ENCODE measurements at regions of chr3 and their contacts with region 1.

Region 1: DNA sequence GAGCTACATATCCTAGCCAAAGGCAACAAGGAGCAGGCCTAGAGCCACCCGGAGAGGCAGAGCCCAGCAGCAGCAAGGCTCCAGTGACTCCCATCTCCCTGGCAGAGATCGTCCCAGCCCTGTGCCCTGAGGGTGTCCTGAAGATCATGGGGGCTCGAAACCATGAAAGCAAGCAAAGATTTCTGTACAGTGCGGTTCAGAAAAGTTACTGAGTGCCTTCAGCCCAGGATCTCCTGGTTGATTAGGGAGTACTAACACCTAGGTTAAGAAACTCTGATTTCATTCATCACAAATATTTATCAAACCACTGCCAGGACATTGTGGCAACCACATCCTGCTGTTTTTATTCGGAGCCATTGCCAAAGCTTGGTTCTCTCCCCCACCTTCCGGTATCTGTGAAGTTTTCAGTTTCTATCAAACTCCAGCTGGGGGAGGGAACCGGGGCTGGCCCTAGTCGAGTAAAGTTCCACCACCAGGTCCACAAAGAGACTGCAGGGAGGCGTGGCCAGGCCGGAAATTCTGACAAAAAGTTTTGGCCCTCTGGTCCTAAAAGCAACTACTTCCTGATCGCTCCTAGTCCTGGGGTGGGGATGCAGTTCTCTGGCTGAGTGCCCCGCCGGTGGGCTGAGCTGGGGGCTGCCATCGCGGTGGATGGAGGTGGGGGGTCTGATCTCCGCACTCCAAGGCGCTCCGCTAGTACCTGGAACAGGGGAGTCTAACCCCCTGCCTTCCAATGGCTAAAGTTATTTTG is 1.2 kb downstream of the RAB43 start:
- DNase-seq: peak; percentile 98
- ATAC-seq: peak; percentile 69
- H3K4me3 Mint-ChIP-seq: peak overlapping the region; percentile 84
- H3K27ac Mint-ChIP-seq: peak overlapping the region; percentile 91
- H3K4me1 Mint-ChIP-seq: peaks cover 56% of the 10 kb centered on the region
- H3K27me3 Mint-ChIP-seq: no peaks in the 10 kb centered on the region

Region 2: GRCh38 chr3:128763967-128764366 is 356.5 kb before region 1 on chr3:
- CTCF ChIA-PET with region 1: no interaction called
- POLR2A ChIA-PET with region 1: no interaction called
- DNase-seq: peak; percentile 49
- ATAC-seq: peak; percentile 80
- H3K4me3 Mint-ChIP-seq: no peak overlapping the region
- H3K27ac Mint-ChIP-seq: peak overlapping the region; percentile 77
- H3K4me1 Mint-ChIP-seq: peaks cover 55% of the 10 kb centered on the region
- H3K27me3 Mint-ChIP-seq: no peaks in the 10 kb centered on the region

Region 3: GRCh38 chr3:129026728-129027543 is 93.5 kb before region 1 on chr3:
- CTCF ChIA-PET with region 1: interaction called, 4 read pairs
- POLR2A ChIA-PET with region 1: interaction called, 34 read pairs
- DNase-seq: peak; percentile 96
- ATAC-seq: peak; percentile 100
- H3K4me3 Mint-ChIP-seq: peak overlapping the region; percentile 81
- H3K27ac Mint-ChIP-seq: peak overlapping the region; percentile 95
- H3K4me1 Mint-ChIP-seq: peaks cover 30% of the 10 kb centered on the region
- H3K27me3 Mint-ChIP-seq: peaks cover 2% of the 10 kb centered on the region

Region 4: DNA sequence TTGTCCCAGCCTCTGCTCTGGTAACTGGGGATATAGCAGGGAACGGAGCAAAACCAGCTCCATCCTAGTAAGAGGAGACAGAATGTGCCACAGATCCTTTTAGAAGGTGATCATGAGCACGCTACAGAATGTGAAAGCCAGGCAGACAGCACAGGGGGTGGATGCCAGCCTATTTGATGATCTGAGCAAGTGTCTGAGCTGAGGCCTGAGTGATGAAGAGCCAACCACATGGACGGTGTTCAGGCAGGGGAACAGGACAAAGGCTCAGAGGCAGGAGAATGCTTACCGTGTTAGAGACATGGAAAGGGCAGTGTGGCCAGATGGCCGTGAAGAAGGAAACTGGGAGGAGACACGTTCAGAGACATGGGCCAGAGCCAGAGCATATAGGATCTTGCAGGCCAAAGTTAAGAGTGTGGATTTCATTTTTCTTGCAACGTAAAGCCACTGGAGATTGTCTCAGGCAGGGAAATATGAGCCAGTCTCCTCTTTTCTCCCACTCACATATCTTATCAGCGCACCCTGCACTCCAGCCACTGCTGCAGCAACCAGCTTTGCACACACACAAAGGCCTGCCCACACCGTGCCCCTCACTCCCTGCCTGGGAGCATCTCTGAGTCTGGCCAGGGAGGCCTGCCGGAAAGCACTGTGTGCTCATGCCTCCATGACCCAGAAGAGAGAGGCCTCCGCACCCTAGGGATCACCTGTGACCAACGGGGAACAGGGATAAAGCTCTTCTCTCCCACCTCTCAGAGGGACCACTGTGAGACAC is 18.9 kb before region 1 on chr3:
- CTCF ChIA-PET with region 1: interaction called, 6 read pairs
- POLR2A ChIA-PET with region 1: interaction called, 103 read pairs
- DNase-seq: no peak
- ATAC-seq: no peak
- H3K4me3 Mint-ChIP-seq: no peak overlapping the region
- H3K27ac Mint-ChIP-seq: peak overlapping the region; percentile 65
- H3K4me1 Mint-ChIP-seq: peaks cover 42% of the 10 kb centered on the region
- H3K27me3 Mint-ChIP-seq: no peaks in the 10 kb centered on the region

Region 5: DNA sequence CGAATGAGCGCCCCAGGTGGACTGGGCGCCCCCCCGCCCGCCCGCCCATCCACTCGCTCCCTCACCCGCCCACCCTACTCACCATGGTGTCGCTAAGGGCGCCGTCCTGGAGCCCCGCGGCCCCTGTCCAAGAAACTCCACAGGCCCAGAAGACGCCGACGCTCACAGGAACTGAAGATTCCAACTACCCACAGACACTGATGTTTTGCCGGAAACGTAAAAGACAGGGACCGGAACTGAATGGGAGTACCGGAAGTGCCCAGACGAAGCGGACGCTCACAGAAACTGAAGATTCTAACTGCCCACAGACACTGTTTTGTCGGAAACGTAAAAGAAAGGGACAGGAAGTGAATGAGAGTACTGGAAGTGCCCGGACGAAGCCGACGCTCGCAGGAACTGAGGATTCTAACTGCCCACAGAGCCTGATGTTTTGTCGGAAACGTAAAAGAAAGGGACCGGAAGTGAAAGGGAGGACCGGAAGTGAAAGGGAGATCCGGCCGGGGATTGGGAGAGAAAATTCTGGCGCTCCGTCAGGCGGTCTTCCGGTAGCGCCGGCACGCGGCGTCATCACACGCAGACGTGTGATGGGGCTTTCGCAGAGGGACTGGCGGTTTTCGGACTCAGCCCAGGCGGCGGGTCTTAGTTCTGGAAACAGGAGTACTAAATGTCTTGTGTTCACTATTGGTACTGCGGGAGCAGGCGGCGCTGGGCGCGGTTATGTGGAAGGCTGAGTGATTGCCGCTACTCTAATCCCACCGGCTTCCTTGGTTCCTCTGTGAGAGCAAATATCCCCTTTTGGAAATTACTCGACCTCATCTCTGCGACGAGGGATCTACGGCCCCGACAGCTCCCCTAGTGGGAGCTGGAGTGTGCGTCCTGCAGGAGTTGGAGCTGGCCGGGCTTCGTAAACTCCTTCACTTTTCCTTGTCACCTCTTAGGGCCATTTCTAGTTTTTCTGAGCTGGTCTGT is 40.7 kb after region 1 on chr3 and contains the start of gene ISY1:
- CTCF ChIA-PET with region 1: interaction called, 36 read pairs
- POLR2A ChIA-PET with region 1: interaction called, 13 read pairs
- DNase-seq: peak; percentile 93
- ATAC-seq: peak; percentile 84
- H3K4me3 Mint-ChIP-seq: peak within 1 kb of the TSS; percentile 91
- H3K27ac Mint-ChIP-seq: peak within 1 kb of the TSS; percentile 99
- H3K4me1 Mint-ChIP-seq: peaks cover 36% of the 10 kb centered on the region
- H3K27me3 Mint-ChIP-seq: no peaks in the 10 kb centered on the region
- total RNA-seq, gene ISY1: 57.9 to 65.7 TPM

Region 6: GRCh38 chr3:129195731-129196256 is 75.4 kb after region 1 on chr3:
- CTCF ChIA-PET with region 1: no interaction called
- POLR2A ChIA-PET with region 1: no interaction called
- DNase-seq: no peak
- ATAC-seq: no peak
- H3K4me3 Mint-ChIP-seq: no peak overlapping the region
- H3K27ac Mint-ChIP-seq: peak overlapping the region; percentile 69
- H3K4me1 Mint-ChIP-seq: peaks cover 19% of the 10 kb centered on the region
- H3K27me3 Mint-ChIP-seq: no peaks in the 10 kb centered on the region

Measured in activated CD8-positive, alpha-beta T cell treated with anti-CD3 and anti-CD28 coated beads, Interleukin-2, amount 10 ng/mL, durations not matched to agents 7 days and 5 days (primary cell).